ENCODE measurements at regions of chr3 and their contacts with region 1.

Region 1: DNA sequence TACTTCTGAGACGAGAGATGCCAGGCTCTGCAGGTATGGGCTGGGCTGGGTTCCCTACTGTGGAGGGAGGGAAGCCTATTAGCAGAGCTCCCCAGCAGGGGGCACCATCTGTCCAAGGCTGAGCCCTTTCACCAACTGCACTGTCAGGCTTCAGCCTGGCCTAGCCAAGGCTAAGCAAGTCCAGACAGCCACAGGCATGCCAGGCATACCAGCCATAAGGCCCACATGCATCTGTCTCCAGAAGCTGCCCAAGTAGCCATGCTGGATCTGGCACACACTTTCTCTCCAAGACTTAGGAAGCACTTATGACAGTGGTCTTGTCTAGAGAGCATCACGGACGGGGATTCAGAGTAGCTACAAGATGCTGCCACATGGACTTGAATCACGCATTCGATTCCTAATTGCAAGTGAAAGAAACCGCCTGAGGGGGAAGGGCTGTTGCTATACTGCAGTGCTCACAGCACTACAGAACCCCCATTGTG is 28.3 kb downstream of the RUVBL1 start:
- DNase-seq: peak; percentile 80
- H3K4me3 ChIP-seq: no peak overlapping the region
- H3K27ac ChIP-seq: peak overlapping the region; percentile 5
- H3K4me1 ChIP-seq: peaks cover 11% of the 10 kb centered on the region
- CTCF ChIP-seq: peak; percentile 89

Region 2: GRCh38 chr3:128133273-128134084 is 38.2 kb after region 1 on chr3:
- CTCF ChIA-PET with region 1: interaction called, 15 read pairs
- POLR2A ChIA-PET with region 1: no interaction called
- intact Hi-C with region 1: loop called (anchors 1 kb)
- DNase-seq: peak; percentile 57
- H3K4me3 ChIP-seq: no peak overlapping the region
- H3K27ac ChIP-seq: no peak overlapping the region
- H3K4me1 ChIP-seq: no peaks in the 10 kb centered on the region
- CTCF ChIP-seq: peak; percentile 93

Region 3: DNA sequence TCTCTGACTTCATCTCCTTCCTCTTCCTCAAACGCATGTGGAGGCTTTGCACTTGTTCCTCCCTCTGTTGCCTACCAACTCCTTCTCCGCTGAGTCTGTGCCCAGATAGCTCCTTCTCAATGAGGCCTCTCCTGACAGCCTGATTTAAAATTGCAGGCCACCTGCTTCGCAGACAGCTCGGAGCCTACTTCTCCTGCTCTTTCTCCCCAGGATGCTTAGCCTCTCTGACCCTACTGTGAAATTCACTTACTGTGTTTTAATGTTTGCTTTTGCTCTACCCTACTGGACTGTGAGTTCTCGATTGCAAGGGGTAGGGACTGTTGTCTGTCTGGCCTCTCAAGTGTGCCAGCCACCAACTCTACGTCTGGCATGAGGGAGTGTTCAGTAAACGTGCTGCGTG is 141.4 kb after region 1 on chr3:
- CTCF ChIA-PET with region 1: no interaction called
- POLR2A ChIA-PET with region 1: no interaction called
- intact Hi-C with region 1: no loop called
- DNase-seq: no peak
- H3K4me3 ChIP-seq: no peak overlapping the region
- H3K27ac ChIP-seq: no peak overlapping the region
- H3K4me1 ChIP-seq: peaks cover 10% of the 10 kb centered on the region
- CTCF ChIP-seq: no peak

Region 4: GRCh38 chr3:128322066-128323022 is 227.1 kb after region 1 on chr3:
- CTCF ChIA-PET with region 1: interaction called, 4 read pairs
- POLR2A ChIA-PET with region 1: no interaction called
- intact Hi-C with region 1: loop called (anchors 10 kb)
- DNase-seq: peak; percentile 43
- H3K4me3 ChIP-seq: no peak overlapping the region
- H3K27ac ChIP-seq: no peak overlapping the region
- H3K4me1 ChIP-seq: no peaks in the 10 kb centered on the region
- CTCF ChIP-seq: peak; percentile 73

Region 5: DNA sequence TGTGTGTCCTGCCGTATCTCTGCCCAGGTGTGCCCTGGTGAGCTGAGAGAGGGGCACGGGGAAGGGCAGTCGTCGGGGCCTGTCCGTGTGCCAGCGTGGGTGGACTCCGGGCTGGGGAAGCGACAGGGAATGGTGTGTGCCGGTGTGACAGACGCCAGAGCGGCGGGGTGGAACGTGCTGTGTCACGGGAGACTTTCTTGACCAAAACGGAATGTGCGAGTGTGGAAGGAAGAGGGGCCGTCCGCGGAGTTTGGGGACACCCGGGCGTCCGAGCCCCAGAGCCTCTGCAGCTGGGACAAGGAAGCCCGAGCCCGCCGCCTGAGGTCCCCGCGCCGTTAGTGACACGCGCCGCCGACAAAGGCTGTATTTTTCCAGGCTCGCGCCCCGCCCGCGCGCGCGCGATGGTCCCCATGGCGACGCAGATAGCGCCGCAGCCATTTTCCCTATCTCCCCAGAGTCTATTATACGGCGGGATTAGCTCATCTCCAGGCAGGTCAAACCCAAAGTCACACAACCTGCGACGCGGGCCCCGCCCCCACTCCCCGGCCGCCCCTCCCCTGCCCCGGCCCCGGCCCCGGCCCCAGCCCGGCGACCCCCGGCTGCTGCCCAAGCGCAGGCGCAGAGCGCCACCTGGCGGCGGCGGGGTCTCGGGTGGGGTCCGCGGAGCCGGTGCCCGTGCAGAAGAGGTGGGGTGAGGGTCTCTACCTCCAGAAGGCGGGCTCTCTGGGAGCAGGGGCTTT is 402.3 kb after region 1 on chr3:
- CTCF ChIA-PET with region 1: no interaction called
- POLR2A ChIA-PET with region 1: no interaction called
- intact Hi-C with region 1: loop called (anchors 5 kb)
- DNase-seq: peak; percentile 61
- H3K4me3 ChIP-seq: peak overlapping the region; percentile 49
- H3K27ac ChIP-seq: no peak overlapping the region
- H3K4me1 ChIP-seq: no peaks in the 10 kb centered on the region
- CTCF ChIP-seq: peak; percentile 80; the same call in 1 of the 2 replicates

Measured in OCI-LY7 (cell line).